Gastrocnemius medialis (tissue), 4 donors: ENCODE measurements at regions of chr2 and their contacts with region 1.

Region 1: GRCh38 chr2:1742681-1743395 is 1.5 kb downstream of the PXDN start:
- DNase-seq: peak; percentile 58 to 63
- ATAC-seq: peak; percentile 31 to 53
- H3K4me3 ChIP-seq: peak overlapping the region; percentile 62 to 69 (median 68)
- H3K27ac ChIP-seq: peak overlapping the region; percentile 82 to 87 (median 84)
- H3K4me1 ChIP-seq: peaks cover 3 to 12% of the 10 kb centered on the region in 2 donors
- H3K27me3 ChIP-seq: peaks cover 6 to 18% (median 17%) of the 10 kb centered on the region in 3 donors
- CTCF ChIP-seq: peak in 3 of 5 experiments; percentile 43 to 55 (median 44)
- POLR2A ChIP-seq: no peak

Region 2: DNA sequence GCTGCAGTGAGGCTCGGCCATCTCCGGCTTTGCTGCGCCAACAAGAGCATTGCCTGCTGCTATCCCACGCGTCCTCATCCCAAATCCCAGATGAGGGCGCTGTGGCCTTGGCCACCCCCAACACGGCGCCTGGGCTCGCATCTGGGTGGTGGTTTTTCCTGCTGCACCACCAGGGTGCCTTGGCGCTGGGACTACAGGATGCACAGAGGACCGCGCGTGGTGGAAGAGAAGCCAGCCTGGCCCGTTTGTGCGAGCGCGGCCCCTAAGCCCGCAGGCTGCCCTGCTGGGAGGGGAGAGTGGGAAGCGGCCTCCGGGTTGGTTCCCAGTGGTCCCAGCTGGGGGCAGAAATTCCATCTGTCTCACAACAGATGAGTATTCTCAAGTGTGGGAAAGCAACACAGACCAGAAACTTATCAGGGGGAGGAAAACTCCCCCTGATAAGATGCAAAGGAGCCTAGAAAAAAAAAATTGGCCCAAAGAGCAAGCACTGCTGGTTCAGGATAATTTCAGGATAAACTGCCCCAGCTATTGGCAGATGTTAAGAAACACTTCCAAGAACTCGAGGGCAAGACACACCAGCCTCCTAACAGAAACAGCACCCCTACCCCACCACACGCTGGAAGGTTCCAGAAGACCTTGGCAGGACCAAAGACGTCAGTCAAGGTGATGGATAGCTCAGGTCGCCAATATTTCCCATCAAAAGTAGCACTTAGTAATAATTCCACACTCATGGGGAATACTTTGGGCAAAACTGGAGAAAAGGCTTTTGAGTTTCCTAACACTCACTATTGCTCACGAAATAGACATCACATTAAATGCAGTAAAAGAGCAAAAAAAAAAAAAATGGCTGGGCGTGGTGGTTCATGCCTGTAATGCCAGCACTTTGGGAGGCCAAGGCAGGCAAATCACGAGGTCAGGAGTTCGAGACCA is 150.6 kb before region 1 on chr2:
- in situ Hi-C with region 1: no loop called
- intact Hi-C with region 1: loop called (anchors 2 kb)
- DNase-seq: peak in 1 of 2 donors; percentile 43
- ATAC-seq: peak in 1 of 2 donors; percentile 25
- H3K4me3 ChIP-seq: peak overlapping the region in 1 of 4 donors; percentile 1
- H3K27ac ChIP-seq: peak overlapping the region in 1 of 4 donors; percentile 25
- H3K4me1 ChIP-seq: peaks cover 0 to 13% of the 10 kb centered on the region in 2 donors
- H3K27me3 ChIP-seq: peaks cover 4 to 13% (median 11%) of the 10 kb centered on the region in 3 donors
- CTCF ChIP-seq: peak; percentile 34 to 52 (median 46)
- POLR2A ChIP-seq: no peak

Region 3: DNA sequence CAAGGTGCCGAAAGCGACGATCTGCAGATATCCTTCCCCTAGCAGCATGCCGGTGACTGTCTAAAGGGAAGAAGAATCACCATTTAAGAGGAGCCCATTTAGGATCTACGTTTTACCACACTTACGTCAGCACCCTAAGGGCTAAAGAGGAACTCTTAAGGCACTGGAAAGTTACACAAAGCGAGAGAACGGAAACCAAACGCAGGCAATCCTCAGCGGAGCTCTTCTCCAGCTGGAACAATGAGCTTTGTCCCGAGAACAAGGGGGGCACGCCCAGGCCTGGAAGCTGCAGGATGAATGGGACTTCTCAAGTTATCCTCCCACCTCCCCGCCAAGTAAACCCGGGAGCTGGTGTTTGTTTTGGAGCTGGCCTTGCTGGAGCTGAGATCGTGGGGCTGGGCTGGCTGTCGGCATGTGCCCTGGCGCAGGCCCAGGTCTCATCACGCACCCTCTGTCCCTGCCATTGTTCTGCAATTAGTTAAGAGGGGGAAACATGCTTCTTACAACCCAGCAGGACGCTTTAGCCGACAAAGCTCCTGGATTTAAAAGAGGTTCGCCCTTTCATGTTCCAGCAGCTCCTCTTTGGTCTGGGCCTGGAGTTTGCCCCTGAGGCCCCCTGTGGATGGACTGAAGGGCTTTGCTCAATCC is 34.9 kb before region 1 on chr2:
- in situ Hi-C with region 1: no loop called
- intact Hi-C with region 1: no loop called
- DNase-seq: peak in 1 of 2 donors; percentile 32
- ATAC-seq: peak; percentile 74 to 85
- H3K4me3 ChIP-seq: peak overlapping the region in 1 of 4 donors; percentile 10
- H3K27ac ChIP-seq: peak overlapping the region; percentile 52 to 73 (median 69)
- H3K4me1 ChIP-seq: peaks cover 8 to 19% of the 10 kb centered on the region in 2 donors
- H3K27me3 ChIP-seq: no peaks in the 10 kb centered on the region
- CTCF ChIP-seq: no peak
- POLR2A ChIP-seq: peak in 1 of 2 donors; percentile 29

Region 4: GRCh38 chr2:1755436-1756191 is 12.8 kb after region 1 on chr2:
- in situ Hi-C with region 1: no loop called
- intact Hi-C with region 1: no loop called
- DNase-seq: no peak
- ATAC-seq: no peak
- H3K4me3 ChIP-seq: no peak overlapping the region
- H3K27ac ChIP-seq: no peak overlapping the region
- H3K4me1 ChIP-seq: no peaks in the 10 kb centered on the region
- H3K27me3 ChIP-seq: peaks cover 0 to 10% (median 3%) of the 10 kb centered on the region in 3 donors
- CTCF ChIP-seq: no peak
- POLR2A ChIP-seq: no peak

Region 5: DNA sequence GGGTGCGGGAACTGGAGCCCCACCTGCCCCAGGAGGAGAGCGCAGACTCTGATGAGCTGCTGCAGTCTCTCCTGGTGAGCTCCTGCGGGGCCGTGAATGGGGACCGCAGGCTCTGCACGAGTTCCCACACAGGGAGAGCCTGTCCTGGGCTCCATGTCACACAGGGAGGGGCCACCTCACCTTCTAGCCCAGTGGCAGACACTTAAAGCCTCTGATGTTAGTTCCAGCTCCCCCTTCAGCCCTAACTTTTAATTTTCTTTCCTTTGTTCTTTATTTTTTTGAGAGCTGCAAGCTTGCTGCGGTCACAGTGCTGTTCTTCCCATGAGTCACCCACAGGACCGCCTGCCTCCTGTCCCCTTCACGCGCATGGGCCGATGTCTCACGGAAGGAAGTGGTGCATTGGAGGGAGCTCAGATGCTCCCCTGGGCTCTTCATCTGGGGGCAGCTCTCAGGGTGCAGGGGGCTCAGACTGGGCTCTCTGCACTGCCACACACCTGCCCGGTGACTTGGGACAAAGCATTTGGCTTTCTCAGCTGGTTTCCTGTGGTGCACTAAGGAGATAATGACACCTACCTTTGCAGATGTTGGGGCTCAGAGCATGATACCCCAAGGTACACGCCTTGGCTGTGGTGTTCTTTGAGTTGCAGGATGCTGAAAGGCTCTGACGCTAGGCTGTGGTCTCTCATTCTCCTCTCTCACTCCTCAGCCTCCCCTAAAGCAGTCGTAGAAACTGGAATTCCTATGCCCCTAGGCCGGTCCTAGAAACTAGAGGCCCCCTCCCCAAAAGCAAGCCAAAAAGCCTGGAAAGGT is 38.6 kb after region 1 on chr2:
- in situ Hi-C with region 1: no loop called
- intact Hi-C with region 1: no loop called
- DNase-seq: no peak
- ATAC-seq: no peak
- H3K4me3 ChIP-seq: no peak overlapping the region
- H3K27ac ChIP-seq: no peak overlapping the region
- H3K4me1 ChIP-seq: no peaks in the 10 kb centered on the region
- H3K27me3 ChIP-seq: no peaks in the 10 kb centered on the region
- CTCF ChIP-seq: no peak
- POLR2A ChIP-seq: no peak

Region 6: DNA sequence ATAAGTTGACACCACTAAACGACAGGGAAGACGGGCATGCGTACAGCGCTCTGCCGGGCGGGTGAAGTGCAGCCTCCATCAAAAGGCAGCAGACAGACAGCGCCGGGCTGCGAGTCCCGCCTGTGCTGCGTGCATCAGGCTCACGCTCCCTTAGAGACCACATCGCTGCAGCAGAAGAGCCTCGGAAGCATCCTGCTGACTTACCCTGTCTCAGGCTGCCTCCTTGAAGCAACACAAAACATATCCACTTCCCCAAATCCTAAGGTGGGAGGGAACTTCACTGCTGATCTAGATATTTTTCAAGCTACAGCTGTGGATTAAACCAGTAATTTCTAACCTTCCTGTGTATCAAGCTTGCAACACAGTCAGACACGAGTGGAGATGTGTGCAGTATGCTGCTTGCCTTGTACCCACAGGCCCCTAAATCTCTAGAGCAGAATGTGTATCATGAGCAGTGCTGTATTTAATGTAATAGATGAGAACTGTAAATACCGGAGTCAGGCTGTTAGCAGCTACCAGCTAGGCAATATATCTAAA is 581.8 kb after region 1 on chr2:
- in situ Hi-C with region 1: no loop called
- intact Hi-C with region 1: no loop called
- DNase-seq: no peak
- ATAC-seq: no peak
- H3K4me3 ChIP-seq: no peak overlapping the region
- H3K27ac ChIP-seq: no peak overlapping the region
- H3K4me1 ChIP-seq: no peaks in the 10 kb centered on the region
- H3K27me3 ChIP-seq: peaks cover 0 to 3% (median 0%) of the 10 kb centered on the region in 3 donors
- CTCF ChIP-seq: no peak
- POLR2A ChIP-seq: no peak